OCI-LY7 (cell line): ENCODE measurements at regions of chr2 and their contacts with region 1.

Region 1: DNA sequence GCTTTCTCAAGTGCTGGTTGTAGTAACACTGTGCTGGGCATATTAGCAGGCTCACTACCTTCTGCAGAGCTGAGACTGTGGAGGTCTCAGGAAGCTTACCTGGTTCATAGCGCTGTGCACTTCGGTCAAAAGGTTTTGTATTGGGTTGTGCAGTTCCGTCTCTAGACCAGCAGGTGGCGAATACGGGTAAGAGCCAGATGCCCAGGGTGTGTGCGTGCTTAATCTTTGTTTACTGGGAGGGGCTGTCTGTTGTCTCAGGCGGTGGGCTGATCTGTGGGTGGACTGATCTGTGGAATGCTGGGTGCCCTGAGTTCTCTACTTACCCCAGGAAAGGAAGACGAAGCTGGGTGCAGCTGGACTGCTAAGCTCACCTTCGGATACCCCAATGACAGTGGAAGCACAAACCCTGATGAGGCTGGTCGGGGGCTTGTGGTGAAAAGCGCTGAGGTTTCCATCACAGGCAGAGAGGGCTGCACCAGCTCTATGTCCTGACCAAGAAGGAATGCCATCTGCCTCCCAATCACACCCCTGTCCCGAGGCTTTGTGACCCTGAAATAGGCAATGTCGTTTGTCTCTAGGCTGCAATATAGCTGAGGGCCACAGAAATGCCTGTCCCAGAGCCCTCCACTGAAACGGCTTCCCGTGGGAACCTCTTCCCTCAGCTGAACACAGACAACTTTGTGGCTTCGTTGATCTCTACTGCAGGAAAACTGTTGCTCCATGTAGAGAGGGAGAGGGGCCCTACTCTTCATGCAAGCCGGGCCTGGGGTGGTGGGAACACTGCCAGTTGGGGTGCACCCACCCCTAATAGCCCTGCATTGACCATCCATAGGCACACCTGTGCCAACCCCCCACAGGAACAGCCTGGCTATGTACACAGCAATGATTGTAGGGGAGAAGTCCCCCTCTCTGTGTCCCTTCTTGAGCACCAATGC is 45.9 kb upstream of the FAM117B start:
- DNase-seq: peak; percentile 86
- H3K4me3 ChIP-seq: no peak overlapping the region
- H3K27ac ChIP-seq: no peak overlapping the region
- H3K4me1 ChIP-seq: peaks cover 3% of the 10 kb centered on the region
- CTCF ChIP-seq: peak; percentile 93

Region 2: DNA sequence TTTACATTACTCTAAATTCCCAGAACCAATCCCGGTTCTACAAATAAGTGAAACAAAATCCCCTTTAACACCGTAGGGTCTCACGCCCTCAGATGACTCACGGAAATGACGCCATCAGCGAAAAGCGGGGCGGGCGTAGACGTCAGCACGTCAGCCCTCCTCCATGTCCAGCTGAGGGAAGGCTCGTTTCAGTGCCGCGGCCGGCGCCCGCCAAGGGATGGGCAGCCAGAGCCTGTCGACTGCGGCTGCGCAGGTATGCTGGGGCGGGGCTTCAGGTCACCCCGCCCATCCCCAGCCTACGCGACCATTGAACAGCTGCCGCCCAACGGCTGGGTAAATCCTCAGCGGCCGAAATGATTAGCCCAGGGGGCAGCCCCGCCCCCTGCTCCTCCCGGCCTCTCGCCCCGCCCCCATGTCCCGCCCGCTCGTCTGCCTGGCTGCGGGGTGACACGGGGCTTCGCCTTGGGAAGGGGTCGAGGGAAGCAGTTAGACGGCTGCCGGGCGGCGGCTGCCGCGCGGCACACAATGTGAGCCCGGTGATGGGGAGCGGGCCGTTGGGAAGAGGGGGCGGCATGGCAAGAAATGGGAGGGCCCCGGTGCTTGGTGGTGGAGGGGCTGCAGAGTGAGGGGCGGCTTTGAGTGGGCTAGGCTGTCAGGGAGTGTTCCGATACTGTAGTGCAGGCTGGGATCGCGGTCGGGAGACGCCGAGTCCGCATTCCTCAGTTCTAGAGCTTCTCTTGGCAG is 425.7 kb after region 1 on chr2 and contains the start of gene NBEAL1:
- CTCF ChIA-PET with region 1: no interaction called
- POLR2A ChIA-PET with region 1: no interaction called
- intact Hi-C with region 1: loop called (anchors 10 kb)
- DNase-seq: peak; percentile 96
- H3K4me3 ChIP-seq: peak within 1 kb of the TSS; percentile 76
- H3K27ac ChIP-seq: no peak within 1 kb of the TSS
- H3K4me1 ChIP-seq: peaks cover 19% of the 10 kb centered on the region
- CTCF ChIP-seq: no peak
- total RNA-seq, gene NBEAL1: 5.3 and 5.9 TPM in 2 replicates

Region 3: GRCh38 chr2:203155406-203155805 is 566.5 kb after region 1 on chr2:
- CTCF ChIA-PET with region 1: no interaction called
- POLR2A ChIA-PET with region 1: no interaction called
- intact Hi-C with region 1: loop called (anchors 10 kb)
- DNase-seq: peak; percentile 12
- H3K4me3 ChIP-seq: no peak overlapping the region
- H3K27ac ChIP-seq: no peak overlapping the region
- H3K4me1 ChIP-seq: no peaks in the 10 kb centered on the region
- CTCF ChIP-seq: peak; percentile 57